Activated CD8-positive, alpha-beta T cell treated with anti-CD3 and anti-CD28 coated beads, Interleukin-2, amount 10 ng/mL, durations not matched to agents 7 days and 5 days (primary cell): ENCODE measurements at regions of chr9 and their contacts with region 1.

Region 1: GRCh38 chr9:18255158-18255629 is 218.8 kb upstream of the ADAMTSL1 start:
- DNase-seq: peak; percentile 82
- ATAC-seq: peak; percentile 81
- H3K4me3 Mint-ChIP-seq: no peak overlapping the region
- H3K27ac Mint-ChIP-seq: no peak overlapping the region
- H3K4me1 Mint-ChIP-seq: no peaks in the 10 kb centered on the region
- H3K27me3 Mint-ChIP-seq: peaks cover 3% of the 10 kb centered on the region

Region 2: DNA sequence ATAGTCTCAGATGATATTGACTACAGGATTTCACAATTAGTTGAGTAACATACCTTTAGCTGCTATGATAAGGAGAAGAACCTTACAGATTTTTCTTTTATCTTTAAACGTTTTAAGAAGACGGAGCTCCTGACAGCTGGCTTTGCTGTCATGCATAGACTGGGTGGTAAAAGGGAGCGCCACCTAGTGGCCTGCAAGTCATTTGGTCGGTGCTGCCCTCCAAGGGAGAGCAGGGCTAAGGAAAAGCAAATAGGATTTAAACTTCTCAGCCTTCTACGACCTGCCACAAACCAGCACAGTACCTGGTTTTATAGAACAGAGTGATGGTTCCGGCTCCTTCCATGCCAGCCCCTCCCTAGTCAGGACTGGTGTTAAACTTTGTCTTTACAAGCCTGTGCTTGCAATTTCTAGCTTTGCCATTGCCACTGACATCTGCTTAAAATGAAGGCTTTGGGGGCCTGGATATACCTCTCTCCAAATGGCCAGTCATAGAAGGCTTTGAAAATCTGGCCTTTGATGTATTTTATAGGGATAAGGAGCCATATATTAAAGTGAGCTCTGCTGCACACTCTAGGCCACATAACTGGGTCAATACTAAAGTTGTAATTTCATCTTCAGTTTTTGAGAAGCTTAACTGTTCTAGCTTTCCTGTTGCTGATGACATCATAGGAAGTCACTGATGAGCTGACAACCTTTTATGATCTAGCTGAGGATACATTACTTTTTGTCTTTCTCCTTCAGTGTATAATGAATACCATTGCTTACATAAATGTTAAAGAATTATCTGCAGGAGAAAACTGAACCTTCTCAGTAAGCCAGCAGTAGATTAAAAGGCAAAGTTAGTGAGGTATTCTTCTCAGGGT is 187.7 kb after region 1 on chr9:
- CTCF ChIA-PET with region 1: interaction called, 39 read pairs
- POLR2A ChIA-PET with region 1: no interaction called
- DNase-seq: peak; percentile 68
- ATAC-seq: peak; percentile 84
- H3K4me3 Mint-ChIP-seq: no peak overlapping the region
- H3K27ac Mint-ChIP-seq: no peak overlapping the region
- H3K4me1 Mint-ChIP-seq: no peaks in the 10 kb centered on the region
- H3K27me3 Mint-ChIP-seq: peaks cover 15% of the 10 kb centered on the region

Region 3: GRCh38 chr9:19028835-19029451 is 773.7 kb after region 1 on chr9:
- CTCF ChIA-PET with region 1: interaction called, 36 read pairs
- POLR2A ChIA-PET with region 1: no interaction called
- DNase-seq: peak; percentile 53
- ATAC-seq: no peak
- H3K4me3 Mint-ChIP-seq: no peak overlapping the region
- H3K27ac Mint-ChIP-seq: no peak overlapping the region
- H3K4me1 Mint-ChIP-seq: peaks cover 5% of the 10 kb centered on the region
- H3K27me3 Mint-ChIP-seq: peaks cover 3% of the 10 kb centered on the region